ENCODE measurements at regions of chr12 and their contacts with region 1.

Region 1: DNA sequence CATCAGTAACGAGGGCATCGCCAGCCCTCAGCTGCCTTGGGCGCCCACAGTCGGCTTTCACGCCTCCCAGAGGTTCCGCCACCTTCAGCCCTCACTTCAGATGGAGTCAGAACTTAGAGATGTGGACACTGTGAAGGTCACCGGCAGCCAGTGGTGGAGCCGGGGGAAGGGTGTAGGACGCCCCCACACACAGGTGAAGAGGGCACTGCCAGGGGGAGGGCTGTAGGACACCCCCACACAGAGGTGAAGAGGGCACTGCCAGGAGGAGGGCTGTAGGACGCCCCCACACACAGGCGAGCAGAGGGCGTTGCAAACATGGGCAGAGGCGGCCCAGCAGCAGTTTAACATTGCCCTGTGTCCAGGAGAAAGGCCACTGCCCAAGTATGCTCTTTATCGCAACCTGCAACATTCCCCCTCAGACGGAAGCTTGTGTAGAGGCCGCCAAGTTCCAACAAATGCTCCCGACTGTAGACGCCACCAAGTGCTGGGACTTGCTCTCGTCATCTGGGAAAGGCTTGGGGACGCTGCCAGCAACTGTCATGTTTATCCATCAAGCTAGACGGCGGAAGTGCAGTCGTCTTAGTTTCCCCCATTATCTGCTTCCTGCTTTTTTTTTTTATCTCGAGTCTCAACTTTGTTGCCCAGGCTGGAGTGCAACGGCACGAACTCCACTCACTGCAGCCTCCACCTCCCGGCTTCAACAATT is 4.9 kb upstream of the ANKLE2 start:
- DNase-seq: no peak

Region 2: DNA sequence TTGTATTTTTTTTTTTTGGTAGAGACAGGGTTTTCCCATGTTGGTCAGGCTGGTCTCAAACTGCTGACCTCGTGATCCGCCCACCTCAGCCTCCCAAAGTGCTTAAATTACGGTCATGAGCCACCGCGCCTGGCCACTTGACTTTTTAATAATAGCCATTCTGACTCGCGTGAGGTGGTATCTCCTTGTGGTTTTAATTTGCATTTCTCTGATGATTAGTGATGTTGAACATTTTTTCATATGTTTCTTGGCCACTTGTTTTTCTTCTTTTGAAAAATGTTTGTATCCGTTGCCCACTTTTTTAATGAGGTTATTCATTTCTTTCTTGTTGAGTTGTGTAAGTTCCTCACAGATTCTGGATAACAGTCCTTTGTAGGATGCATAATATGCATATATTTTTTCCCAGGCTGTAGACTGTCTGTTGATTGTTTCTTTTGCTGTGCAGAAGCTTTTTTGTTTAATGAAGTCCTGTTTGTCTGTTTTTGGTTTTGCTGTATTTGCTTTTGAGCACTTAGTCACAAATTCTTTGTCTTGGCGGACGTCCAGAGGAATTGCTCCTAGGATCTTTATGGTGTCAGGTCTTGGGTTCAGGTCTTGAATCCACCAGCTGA is 66.2 kb before region 1 on chr12:
- intact Hi-C with region 1: no loop called
- DNase-seq: no peak

Region 3: GRCh38 chr12:132717531-132718387 is 48.8 kb before region 1 on chr12:
- intact Hi-C with region 1: loop called in 1 of 2 experiments (anchors 1 kb)
- DNase-seq: no peak